GM10248 (cell line): ENCODE measurements at regions of chr18 and their contacts with region 1.

Region 1: DNA sequence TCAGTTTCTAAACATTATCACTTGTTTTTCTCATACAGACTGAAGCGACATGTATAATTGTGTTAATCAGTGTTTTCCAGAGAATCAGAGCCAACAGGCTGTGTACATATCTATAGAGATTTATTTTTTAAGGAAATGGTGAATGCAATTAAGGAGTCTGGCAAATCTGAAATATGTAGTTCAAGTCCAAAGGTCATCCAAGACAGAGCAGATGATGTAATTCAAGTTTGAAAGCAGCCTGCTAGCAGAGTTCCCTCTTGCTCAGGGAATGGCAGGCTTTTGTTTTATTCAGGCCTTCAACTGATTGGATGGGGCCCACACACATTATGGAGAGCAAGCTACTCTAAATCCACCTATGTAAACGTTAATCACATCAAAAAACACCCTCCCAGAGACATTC is 282.6 kb downstream of the CBLN2 start:
- DNase-seq: no peak
- CTCF ChIP-seq: no peak

Region 2: DNA sequence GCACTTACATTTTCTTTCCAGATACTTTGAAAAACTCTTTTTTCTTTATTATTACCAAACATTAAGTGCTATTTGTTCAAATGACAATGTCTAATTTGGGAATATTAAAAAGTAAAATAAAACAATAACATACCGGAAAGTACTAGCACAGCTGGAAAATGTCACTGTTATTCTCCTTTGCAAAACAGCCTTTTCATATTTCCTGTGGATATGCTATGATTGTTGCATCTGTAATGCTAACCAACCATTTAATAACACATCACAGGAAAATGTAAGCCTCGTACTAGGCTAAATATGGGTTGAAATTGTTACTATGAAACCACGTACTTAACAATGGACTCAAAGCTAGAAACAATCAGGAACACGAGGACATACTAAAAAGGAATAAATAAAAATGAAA is 15.5 kb before region 1 on chr18:
- CTCF ChIA-PET with region 1: interaction called, 10 read pairs
- POLR2A ChIA-PET with region 1: no interaction called
- DNase-seq: no peak
- CTCF ChIP-seq: no peak